ENCODE measurements at regions of chr12 and their contacts with region 1.

Region 1: DNA sequence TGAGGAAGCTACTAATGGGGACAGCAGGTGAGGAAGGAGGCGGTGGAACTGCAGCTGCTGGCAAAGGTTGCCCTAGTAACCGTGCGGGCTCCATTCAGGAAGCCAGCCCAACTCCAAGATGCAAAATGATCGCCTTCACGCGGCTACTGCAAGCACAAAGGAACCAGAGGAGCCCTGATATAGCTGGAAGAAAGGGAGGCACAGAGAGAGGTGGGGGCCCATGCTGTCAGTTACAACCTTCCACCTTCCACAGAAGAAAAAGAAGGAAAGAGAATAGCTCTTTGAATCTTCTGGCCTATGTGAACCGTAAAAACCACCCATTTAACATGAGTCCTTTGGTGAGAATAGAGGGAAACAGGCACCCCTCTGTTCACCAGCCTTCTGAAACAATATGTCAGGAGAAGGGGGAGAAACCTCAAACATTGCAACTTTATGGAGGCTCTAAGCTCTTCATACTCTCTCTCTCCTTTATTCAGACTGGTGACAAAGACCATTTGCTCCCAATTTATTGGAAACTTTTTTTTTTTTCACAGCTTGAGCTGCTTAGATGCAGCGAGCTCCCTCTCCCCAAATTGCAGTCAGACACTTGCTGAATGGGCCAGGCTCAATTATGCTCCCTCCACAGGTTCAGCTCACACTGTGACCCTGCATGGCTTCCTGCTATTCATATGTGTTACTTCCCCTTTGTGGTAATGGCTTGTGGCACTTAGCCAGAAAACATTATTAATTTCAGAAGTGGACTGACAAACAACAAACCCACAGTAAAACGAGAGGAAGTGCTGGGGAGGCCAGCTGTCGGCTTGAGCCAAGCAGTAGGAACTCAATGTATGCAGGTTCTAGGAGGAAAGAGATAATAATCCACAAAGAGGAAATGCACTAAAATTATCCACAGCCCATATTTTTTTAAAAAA is 6.2 kb downstream of the DUSP6 start:
- DNase-seq: peak; percentile 63
- H3K4me3 Mint-ChIP-seq: peak overlapping the region; percentile 90
- H3K27ac Mint-ChIP-seq: peak overlapping the region; percentile 97
- H3K4me1 Mint-ChIP-seq: peaks cover 59% of the 10 kb centered on the region
- H3K27me3 Mint-ChIP-seq: no peaks in the 10 kb centered on the region
- CTCF ChIP-seq: no peak

Region 2: GRCh38 chr12:89019408-89020120 is 326.5 kb before region 1 on chr12:
- CTCF ChIA-PET with region 1: no interaction called
- intact Hi-C with region 1: loop called (anchors 2 kb)
- DNase-seq: peak; percentile 82
- H3K4me3 Mint-ChIP-seq: no peak overlapping the region
- H3K27ac Mint-ChIP-seq: no peak overlapping the region
- H3K4me1 Mint-ChIP-seq: peaks cover 21% of the 10 kb centered on the region
- H3K27me3 Mint-ChIP-seq: no peaks in the 10 kb centered on the region
- CTCF ChIP-seq: peak; percentile 91

Region 3: DNA sequence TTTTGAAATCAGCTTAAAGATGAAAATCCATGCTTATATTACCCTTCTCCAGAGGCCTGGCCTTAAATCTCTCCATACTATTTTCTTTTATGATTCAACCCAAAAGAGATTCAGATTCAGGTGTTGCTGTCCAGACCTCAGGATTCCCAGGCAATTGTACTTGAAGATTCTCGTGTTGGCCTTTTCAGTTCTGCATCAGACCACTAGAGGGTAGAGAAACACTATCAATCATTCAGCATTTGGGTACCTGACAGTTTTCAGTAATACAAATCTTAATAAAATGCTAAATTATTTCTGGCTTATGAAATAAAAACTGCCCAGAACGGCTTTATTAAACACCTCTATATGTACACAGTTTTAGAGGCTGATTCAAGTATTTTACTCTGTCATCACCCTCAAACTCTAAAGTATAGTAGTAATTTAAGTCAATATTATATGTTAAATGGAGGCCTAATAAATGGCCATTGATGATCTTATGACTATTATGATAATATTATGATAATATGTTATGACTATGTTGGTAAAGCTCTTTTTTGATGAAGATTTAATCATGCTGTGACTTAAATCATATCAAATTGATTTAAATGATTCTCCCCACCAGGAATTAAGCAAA is 294.9 kb before region 1 on chr12:
- CTCF ChIA-PET with region 1: no interaction called
- intact Hi-C with region 1: loop called (anchors 2 kb)
- DNase-seq: peak; percentile 52
- H3K4me3 Mint-ChIP-seq: no peak overlapping the region
- H3K27ac Mint-ChIP-seq: no peak overlapping the region
- H3K4me1 Mint-ChIP-seq: no peaks in the 10 kb centered on the region
- H3K27me3 Mint-ChIP-seq: no peaks in the 10 kb centered on the region
- CTCF ChIP-seq: peak; percentile 79

Region 4: GRCh38 chr12:89179983-89180382 is 166.1 kb before region 1 on chr12:
- CTCF ChIA-PET with region 1: interaction called, 5 read pairs
- intact Hi-C with region 1: loop called (anchors 5 kb)
- DNase-seq: peak; percentile 71
- H3K4me3 Mint-ChIP-seq: peak overlapping the region; percentile 3
- H3K27ac Mint-ChIP-seq: peak overlapping the region; percentile 40
- H3K4me1 Mint-ChIP-seq: peaks cover 32% of the 10 kb centered on the region
- H3K27me3 Mint-ChIP-seq: no peaks in the 10 kb centered on the region
- CTCF ChIP-seq: no peak

Region 5: GRCh38 chr12:89236748-89237388 is 109.2 kb before region 1 on chr12:
- CTCF ChIA-PET with region 1: interaction called, 3 read pairs
- intact Hi-C with region 1: loop called (anchors 1 kb)
- DNase-seq: peak; percentile 53
- H3K4me3 Mint-ChIP-seq: peak overlapping the region; percentile 30
- H3K27ac Mint-ChIP-seq: peak overlapping the region; percentile 86
- H3K4me1 Mint-ChIP-seq: peaks cover 49% of the 10 kb centered on the region
- H3K27me3 Mint-ChIP-seq: no peaks in the 10 kb centered on the region
- CTCF ChIP-seq: no peak

Region 6: DNA sequence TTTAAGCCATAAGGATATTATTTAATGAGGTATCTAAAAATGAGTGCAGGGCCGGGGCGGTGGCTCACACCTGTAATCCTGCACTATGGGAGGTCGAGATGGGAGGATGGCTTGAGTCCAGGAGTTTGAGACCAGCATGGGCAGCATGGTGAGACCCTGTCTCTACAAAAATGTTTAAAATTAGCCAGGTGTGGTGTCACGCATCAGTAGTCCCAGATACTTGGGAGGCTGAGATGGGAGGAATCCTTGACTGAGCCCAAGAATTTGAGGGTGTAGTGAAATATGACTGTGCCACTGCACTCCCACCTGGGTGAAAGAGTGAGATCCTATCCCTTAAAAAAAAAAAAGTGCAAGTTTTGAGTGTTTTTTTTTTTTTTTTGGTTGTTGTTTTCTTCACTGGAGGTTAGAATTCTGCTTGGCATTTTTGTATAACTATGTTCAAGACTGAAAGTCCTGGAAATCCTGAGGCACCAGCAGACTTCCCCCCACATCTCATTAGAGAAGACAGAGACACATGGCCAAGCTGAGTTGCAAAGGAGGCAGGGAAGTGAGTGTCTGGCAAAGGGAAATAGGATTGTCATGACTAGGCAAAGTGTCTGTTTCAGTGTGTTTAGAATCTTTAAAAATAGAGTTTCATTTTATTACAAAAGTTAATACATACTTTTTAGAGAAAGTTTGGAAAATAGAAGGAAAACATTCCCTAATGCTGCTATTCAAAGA is 59.7 kb after region 1 on chr12:
- CTCF ChIA-PET with region 1: no interaction called
- intact Hi-C with region 1: no loop called
- DNase-seq: no peak
- H3K4me3 Mint-ChIP-seq: no peak overlapping the region
- H3K27ac Mint-ChIP-seq: no peak overlapping the region
- H3K4me1 Mint-ChIP-seq: no peaks in the 10 kb centered on the region
- H3K27me3 Mint-ChIP-seq: no peaks in the 10 kb centered on the region
- CTCF ChIP-seq: no peak